ENCODE measurements at regions of chr19 and their contacts with region 1.

Region 1: DNA sequence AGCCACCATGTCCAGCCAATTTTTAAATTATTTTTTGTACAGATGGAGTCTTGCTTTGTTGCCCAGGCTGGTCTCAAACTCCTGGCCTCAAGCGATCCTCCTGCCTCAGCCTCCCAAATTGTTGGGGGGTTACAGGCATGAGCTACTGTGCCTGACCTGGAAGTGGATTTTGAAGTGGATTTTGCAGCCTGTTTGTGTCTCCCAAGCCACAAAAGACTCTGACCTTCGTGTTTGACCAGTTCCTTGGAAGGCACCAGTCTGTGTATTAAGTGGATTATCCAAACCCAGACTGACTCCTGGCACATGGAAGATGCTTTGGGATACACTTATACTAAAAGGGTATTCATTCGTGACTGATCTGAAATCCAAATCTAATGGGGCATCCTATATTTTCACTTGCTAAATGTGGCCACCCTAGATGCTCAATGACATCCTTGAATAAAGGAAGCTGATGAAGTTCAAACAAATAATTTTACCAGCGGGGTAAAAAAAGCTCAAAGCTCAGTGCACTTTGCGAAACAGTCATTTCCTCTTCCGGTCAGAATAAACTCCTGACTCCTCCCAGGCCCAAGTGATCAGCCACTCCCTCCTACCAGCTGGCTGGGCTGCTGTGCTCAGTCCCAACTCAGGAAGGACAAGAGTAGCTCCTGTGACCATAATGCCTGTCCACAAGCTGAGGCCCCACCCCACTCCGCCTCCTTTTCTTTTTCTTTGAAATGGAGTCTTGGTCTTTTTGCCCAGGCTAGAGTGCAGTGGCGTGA is 32.6 kb upstream of the GATAD2A start:
- DNase-seq: peak in 6 of 9 experiments; percentile 17 to 74 (median 48)
- ATAC-seq: peak; percentile 71
- H3K4me3 ChIP-seq: peak overlapping the region in 1 of 2 experiments; percentile 20
- H3K4me3 Mint-ChIP-seq: peak overlapping the region; percentile 38
- H3K27ac ChIP-seq: peak overlapping the region; percentile 7 to 87
- H3K27ac Mint-ChIP-seq: peak overlapping the region; percentile 82
- H3K4me1 ChIP-seq: peaks cover 12% of the 10 kb centered on the region
- H3K4me1 Mint-ChIP-seq: peaks cover 7% of the 10 kb centered on the region
- H3K27me3 ChIP-seq: no peaks in the 10 kb centered on the region
- H3K27me3 Mint-ChIP-seq: no peaks in the 10 kb centered on the region
- CTCF ChIP-seq: no peak

Region 2: DNA sequence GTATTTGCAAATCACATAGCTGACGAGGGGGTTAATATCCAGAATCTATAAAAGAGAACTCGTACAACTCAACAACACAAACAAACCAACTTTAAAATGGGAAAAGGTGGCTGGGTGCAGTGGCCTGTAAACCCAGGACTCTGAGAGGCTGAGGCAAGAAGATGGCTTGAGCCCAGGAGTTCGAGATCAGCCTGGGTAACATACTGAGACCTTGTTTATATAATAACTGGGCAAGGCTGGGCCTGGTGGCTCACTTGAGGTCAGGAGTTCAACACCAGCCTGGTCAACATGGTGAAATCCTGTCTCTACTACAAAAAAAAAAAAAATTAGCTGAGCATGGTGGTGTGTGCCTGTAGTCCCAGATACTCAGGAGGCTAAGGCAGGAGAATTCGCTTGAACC is 77.9 kb before region 1 on chr19:
- CTCF ChIA-PET with region 1: no interaction called
- POLR2A ChIA-PET with region 1: no interaction called
- intact Hi-C with region 1: no loop called
- DNase-seq: no peak
- ATAC-seq: no peak
- H3K4me3 ChIP-seq: no peak overlapping the region
- H3K4me3 Mint-ChIP-seq: no peak overlapping the region
- H3K27ac ChIP-seq: no peak overlapping the region
- H3K27ac Mint-ChIP-seq: no peak overlapping the region
- H3K4me1 ChIP-seq: no peaks in the 10 kb centered on the region
- H3K4me1 Mint-ChIP-seq: no peaks in the 10 kb centered on the region
- H3K27me3 ChIP-seq: no peaks in the 10 kb centered on the region
- H3K27me3 Mint-ChIP-seq: no peaks in the 10 kb centered on the region
- CTCF ChIP-seq: no peak

Region 3: GRCh38 chr19:19354932-19355331 is 17.9 kb before region 1 on chr19:
- CTCF ChIA-PET with region 1: interaction called, 3 read pairs
- POLR2A ChIA-PET with region 1: no interaction called
- intact Hi-C with region 1: loop called in 1 of 2 experiments (anchors 1 kb)
- DNase-seq: no peak
- ATAC-seq: no peak
- H3K4me3 ChIP-seq: no peak overlapping the region
- H3K4me3 Mint-ChIP-seq: no peak overlapping the region
- H3K27ac ChIP-seq: no peak overlapping the region
- H3K27ac Mint-ChIP-seq: no peak overlapping the region
- H3K4me1 ChIP-seq: peaks cover 6% of the 10 kb centered on the region
- H3K4me1 Mint-ChIP-seq: peaks cover 16% of the 10 kb centered on the region
- H3K27me3 ChIP-seq: no peaks in the 10 kb centered on the region
- H3K27me3 Mint-ChIP-seq: no peaks in the 10 kb centered on the region
- CTCF ChIP-seq: no peak